Motor neuron (in vitro differentiated cells): ENCODE measurements at regions of chr2 and their contacts with region 1.

Region 1: GRCh38 chr2:10141736-10142642 is 19.4 kb downstream of the RRM2 start:
- ATAC-seq: peak; percentile 18 to 84 (median 78)
- H3K4me3 ChIP-seq: no peak overlapping the region
- H3K27ac ChIP-seq: no peak overlapping the region
- H3K4me1 ChIP-seq: peaks cover 4 to 9% of the 10 kb centered on the region in 2 donors

Region 2: GRCh38 chr2:10408649-10409579 is 266.9 kb after region 1 on chr2:
- in situ Hi-C with region 1: loop called in 6 of 9 experiments (anchors 10 to 25 kb)
- ATAC-seq: peak; percentile 52 to 93 (median 87)
- H3K4me3 ChIP-seq: no peak overlapping the region
- H3K27ac ChIP-seq: no peak overlapping the region
- H3K4me1 ChIP-seq: peaks cover 19 to 23% of the 10 kb centered on the region in 2 donors